ENCODE measurements at regions of chr10 and their contacts with region 1.

Region 1: GRCh38 chr10:95408983-95409873 is 118.4 kb upstream of the PDLIM1 start:
- DNase-seq: peak in 1 of 2 donors; percentile 87
- H3K4me3 ChIP-seq: peak overlapping the region in 1 of 2 donors; percentile 9
- H3K27ac ChIP-seq: peak overlapping the region; percentile 89 to 95
- H3K4me1 ChIP-seq: peaks cover 35 to 84% of the 10 kb centered on the region in 2 donors
- H3K27me3 ChIP-seq: no peaks in the 10 kb centered on the region
- CTCF ChIP-seq: no peak

Region 2: DNA sequence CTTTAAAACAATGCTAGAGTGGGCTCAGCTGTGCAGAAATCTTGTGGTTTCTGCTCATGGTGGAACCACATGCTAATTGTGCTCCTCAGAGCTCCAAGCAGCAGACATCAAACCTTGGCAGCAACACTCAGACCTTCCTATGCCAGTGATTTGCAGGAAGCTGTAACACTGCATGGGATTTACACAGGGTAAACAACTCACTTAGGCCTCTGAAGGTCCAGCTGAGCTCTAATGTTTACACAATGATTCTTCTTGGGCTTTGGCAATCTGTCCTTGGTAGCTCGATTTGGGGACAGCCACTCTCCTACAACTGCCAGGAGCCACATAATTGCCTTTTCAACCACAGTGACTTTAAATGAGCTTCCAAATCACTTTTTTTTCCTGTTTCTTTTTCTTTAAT is 20.7 kb before region 1 on chr10:
- intact Hi-C with region 1: loop called (anchors 2 kb)
- DNase-seq: peak in 1 of 2 donors; percentile 80
- H3K4me3 ChIP-seq: no peak overlapping the region
- H3K27ac ChIP-seq: peak overlapping the region; percentile 82 to 89
- H3K4me1 ChIP-seq: peaks cover 58 to 93% of the 10 kb centered on the region in 2 donors
- H3K27me3 ChIP-seq: no peaks in the 10 kb centered on the region
- CTCF ChIP-seq: no peak

Region 3: GRCh38 chr10:95474228-95475002 is 65.2 kb after region 1 on chr10:
- intact Hi-C with region 1: loop called (anchors 2 kb)
- DNase-seq: peak in 1 of 2 donors; percentile 77
- H3K4me3 ChIP-seq: no peak overlapping the region
- H3K27ac ChIP-seq: peak overlapping the region; percentile 95 to 96
- H3K4me1 ChIP-seq: peaks cover 23 to 88% of the 10 kb centered on the region in 2 donors
- H3K27me3 ChIP-seq: no peaks in the 10 kb centered on the region
- CTCF ChIP-seq: peak in 1 of 3 experiments; percentile 15

Measured in ascending aorta (tissue), 2 donors.